B cell (primary cell): ENCODE measurements at regions of chr3 and their contacts with region 1.

Region 1: GRCh38 chr3:187112934-187113793 is 26.1 kb downstream of the RPL39L start:
- DNase-seq: peak; percentile 69
- ATAC-seq: peak; percentile 45
- H3K4me3 ChIP-seq: no peak overlapping the region
- H3K4me3 Mint-ChIP-seq: no peak overlapping the region
- H3K27ac ChIP-seq: no peak overlapping the region
- H3K27ac Mint-ChIP-seq: peak overlapping the region; percentile 42
- H3K4me1 ChIP-seq: peaks cover 3 to 5% of the 10 kb centered on the region in 2 donors
- H3K4me1 Mint-ChIP-seq: peaks cover 6% of the 10 kb centered on the region
- H3K27me3 ChIP-seq: no peaks in the 10 kb centered on the region
- H3K27me3 Mint-ChIP-seq: no peaks in the 10 kb centered on the region
- CTCF ChIP-seq: peak; percentile 88

Region 2: DNA sequence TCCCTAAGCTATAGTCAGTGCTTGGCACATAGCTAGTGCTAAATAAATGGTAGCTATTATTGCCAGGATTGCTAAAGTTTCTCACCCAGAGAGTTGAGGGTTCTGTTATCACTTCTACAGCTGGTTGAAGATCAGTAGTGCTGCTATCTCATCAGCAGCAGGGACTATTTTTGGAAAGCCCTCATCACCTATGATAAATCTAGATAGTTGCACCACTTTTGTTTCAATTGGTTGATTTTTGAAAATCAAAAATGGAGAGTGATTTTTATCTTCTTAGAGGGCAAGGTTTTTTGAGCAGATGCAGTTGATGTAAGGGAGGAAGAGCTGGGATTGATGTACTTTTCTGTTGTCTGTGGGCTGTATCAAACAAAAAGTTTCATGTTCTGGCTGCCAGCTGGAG is 81.2 kb before region 1 on chr3:
- CTCF ChIA-PET with region 1: interaction called, 11 read pairs
- POLR2A ChIA-PET with region 1: no interaction called
- intact Hi-C with region 1: no loop called
- DNase-seq: no peak
- ATAC-seq: no peak
- H3K4me3 ChIP-seq: peak overlapping the region in 2 of 5 experiments; percentile 5 to 20
- H3K4me3 Mint-ChIP-seq: peak overlapping the region; percentile 80
- H3K27ac ChIP-seq: peak overlapping the region; percentile 72 to 84
- H3K27ac Mint-ChIP-seq: peak overlapping the region; percentile 84
- H3K4me1 ChIP-seq: peaks cover 61 to 66% of the 10 kb centered on the region in 2 donors
- H3K4me1 Mint-ChIP-seq: peaks cover 86% of the 10 kb centered on the region
- H3K27me3 ChIP-seq: no peaks in the 10 kb centered on the region
- H3K27me3 Mint-ChIP-seq: no peaks in the 10 kb centered on the region
- CTCF ChIP-seq: no peak

Region 3: DNA sequence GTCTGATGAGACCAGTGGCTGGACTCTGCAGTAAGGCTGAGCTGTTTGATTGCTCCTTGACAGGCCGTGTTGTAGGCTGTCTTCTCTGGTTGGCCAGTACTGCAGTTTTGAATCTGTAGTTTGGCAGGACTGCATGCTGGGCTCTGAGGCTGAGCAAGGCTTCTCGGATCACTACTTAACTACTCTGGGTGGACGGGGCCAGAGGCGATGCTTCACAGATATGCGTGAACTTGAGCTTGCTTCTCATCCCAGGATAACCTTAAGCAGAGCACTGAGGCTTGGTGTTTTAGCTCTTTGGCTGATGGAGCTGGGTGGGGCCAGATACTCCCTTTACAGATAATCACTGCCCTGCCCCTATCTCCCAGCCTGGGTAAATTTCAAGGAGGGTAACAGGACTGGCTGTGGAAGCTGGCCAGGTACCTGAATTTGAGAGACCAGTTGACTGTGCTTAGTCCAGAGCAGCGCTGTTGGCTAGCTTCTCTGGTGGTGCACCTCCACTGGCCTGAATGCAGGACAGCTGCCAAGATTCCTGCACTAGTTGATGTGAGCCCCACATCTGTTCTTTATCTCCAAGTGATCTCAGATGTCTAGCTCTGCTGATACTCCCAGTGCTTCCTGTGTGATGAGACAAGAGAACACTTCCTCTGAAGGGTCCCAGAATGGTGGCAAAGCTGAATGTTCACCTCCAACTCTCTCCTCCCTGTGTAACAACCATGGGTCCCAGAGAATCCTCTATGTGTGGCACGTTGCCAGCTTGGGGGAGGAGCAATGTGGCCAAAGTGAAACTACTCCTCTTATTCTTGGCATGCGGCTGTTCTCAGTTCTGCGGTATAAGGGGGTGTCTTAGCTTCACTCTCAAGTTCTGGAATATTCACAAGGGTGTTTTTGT is 11.7 kb before region 1 on chr3:
- CTCF ChIA-PET with region 1: interaction called, 56 read pairs
- POLR2A ChIA-PET with region 1: interaction called, 4 read pairs
- intact Hi-C with region 1: no loop called
- DNase-seq: peak; percentile 51
- ATAC-seq: peak; percentile 45
- H3K4me3 ChIP-seq: peak overlapping the region in 4 of 5 experiments; percentile 3 to 46 (median 24)
- H3K4me3 Mint-ChIP-seq: peak overlapping the region; percentile 74
- H3K27ac ChIP-seq: peak overlapping the region in 1 of 2 donors; percentile 14
- H3K27ac Mint-ChIP-seq: peak overlapping the region; percentile 26
- H3K4me1 ChIP-seq: peaks cover 10 to 11% of the 10 kb centered on the region in 2 donors
- H3K4me1 Mint-ChIP-seq: peaks cover 30% of the 10 kb centered on the region
- H3K27me3 ChIP-seq: no peaks in the 10 kb centered on the region
- H3K27me3 Mint-ChIP-seq: no peaks in the 10 kb centered on the region
- CTCF ChIP-seq: no peak

Region 4: GRCh38 chr3:187130346-187131066 is 17.3 kb after region 1 on chr3:
- CTCF ChIA-PET with region 1: interaction called, 97 read pairs
- POLR2A ChIA-PET with region 1: no interaction called
- intact Hi-C with region 1: no loop called
- DNase-seq: peak; percentile 84
- ATAC-seq: peak; percentile 92
- H3K4me3 ChIP-seq: peak overlapping the region in 1 of 5 experiments; percentile 28
- H3K4me3 Mint-ChIP-seq: peak overlapping the region; percentile 70
- H3K27ac ChIP-seq: peak overlapping the region; percentile 84 to 90
- H3K27ac Mint-ChIP-seq: peak overlapping the region; percentile 88
- H3K4me1 ChIP-seq: peaks cover 31 to 35% of the 10 kb centered on the region in 2 donors
- H3K4me1 Mint-ChIP-seq: peaks cover 46% of the 10 kb centered on the region
- H3K27me3 ChIP-seq: no peaks in the 10 kb centered on the region
- H3K27me3 Mint-ChIP-seq: no peaks in the 10 kb centered on the region
- CTCF ChIP-seq: no peak

Region 5: DNA sequence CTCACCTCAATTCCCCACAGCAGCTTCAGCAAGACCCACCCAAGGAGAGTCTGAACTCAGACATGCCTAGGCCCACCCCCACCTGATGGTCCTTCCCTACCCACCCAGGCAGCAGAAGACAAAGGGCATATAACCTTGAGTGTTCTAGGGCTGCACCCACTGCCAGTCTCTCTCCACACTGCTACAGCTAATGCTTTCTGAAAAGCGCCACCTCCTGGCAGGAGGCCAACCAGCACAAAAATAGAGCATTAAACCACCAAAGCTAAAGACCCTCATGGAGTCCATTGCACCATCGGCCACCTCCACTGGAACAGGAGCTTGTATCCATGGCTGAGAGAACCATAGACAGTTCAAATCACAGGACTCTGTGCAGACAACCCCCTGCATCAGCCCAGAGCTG is 37.4 kb after region 1 on chr3:
- CTCF ChIA-PET with region 1: interaction called, 196 read pairs
- POLR2A ChIA-PET with region 1: interaction called, 3 read pairs
- intact Hi-C with region 1: loop called (anchors 1 kb)
- DNase-seq: peak; percentile 70
- ATAC-seq: peak; percentile 70
- H3K4me3 ChIP-seq: no peak overlapping the region
- H3K4me3 Mint-ChIP-seq: no peak overlapping the region
- H3K27ac ChIP-seq: no peak overlapping the region
- H3K27ac Mint-ChIP-seq: no peak overlapping the region
- H3K4me1 ChIP-seq: no peaks in the 10 kb centered on the region
- H3K4me1 Mint-ChIP-seq: peaks cover 3% of the 10 kb centered on the region
- H3K27me3 ChIP-seq: no peaks in the 10 kb centered on the region
- H3K27me3 Mint-ChIP-seq: peaks cover 6% of the 10 kb centered on the region
- CTCF ChIP-seq: peak; percentile 75